ENCODE measurements at regions of chr2 and their contacts with region 1.

Region 1: DNA sequence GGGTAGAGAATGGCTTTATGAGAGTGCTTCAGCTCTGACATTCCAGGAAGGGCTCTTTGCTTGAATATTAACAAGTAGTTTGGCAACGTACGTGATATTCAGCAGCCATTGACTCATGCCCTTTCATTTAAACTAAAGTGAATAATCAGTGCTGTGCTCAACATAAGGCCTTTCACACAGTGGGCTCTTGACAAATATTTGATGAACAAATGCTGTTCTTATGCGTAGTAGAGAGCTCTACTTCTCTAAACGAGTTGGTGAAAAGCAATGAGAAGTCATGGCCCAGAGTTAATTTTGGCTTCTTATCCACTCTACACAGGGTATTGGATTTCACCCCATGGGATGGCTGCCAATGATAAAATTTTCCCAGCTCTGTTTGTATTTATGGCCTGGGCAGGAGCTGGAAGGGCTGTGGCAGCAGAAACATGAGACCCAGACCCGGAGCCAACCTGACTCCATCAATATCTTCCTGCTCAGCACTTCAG is 338.9 kb downstream of the CCDC85A start:
- DNase-seq: peak; percentile 68
- H3K4me3 Mint-ChIP-seq: peak overlapping the region; percentile 32
- H3K27ac Mint-ChIP-seq: peak overlapping the region; percentile 75
- H3K4me1 Mint-ChIP-seq: peaks cover 25% of the 10 kb centered on the region
- H3K27me3 Mint-ChIP-seq: no peaks in the 10 kb centered on the region
- CTCF ChIP-seq: no peak

Region 2: GRCh38 chr2:56191683-56192082 is 331.0 kb before region 1 on chr2:
- CTCF ChIA-PET with region 1: no interaction called
- intact Hi-C with region 1: loop called (anchors 10 kb)
- DNase-seq: peak; percentile 59
- H3K4me3 Mint-ChIP-seq: no peak overlapping the region
- H3K27ac Mint-ChIP-seq: no peak overlapping the region
- H3K4me1 Mint-ChIP-seq: peaks cover 10% of the 10 kb centered on the region
- H3K27me3 Mint-ChIP-seq: peaks cover 9% of the 10 kb centered on the region
- CTCF ChIP-seq: peak; percentile 61

Region 3: GRCh38 chr2:56288838-56289580 is 233.6 kb before region 1 on chr2:
- CTCF ChIA-PET with region 1: no interaction called
- intact Hi-C with region 1: loop called (anchors 5 kb)
- DNase-seq: no peak
- H3K4me3 Mint-ChIP-seq: no peak overlapping the region
- H3K27ac Mint-ChIP-seq: no peak overlapping the region
- H3K4me1 Mint-ChIP-seq: peaks cover 23% of the 10 kb centered on the region
- H3K27me3 Mint-ChIP-seq: no peaks in the 10 kb centered on the region
- CTCF ChIP-seq: no peak

Region 4: DNA sequence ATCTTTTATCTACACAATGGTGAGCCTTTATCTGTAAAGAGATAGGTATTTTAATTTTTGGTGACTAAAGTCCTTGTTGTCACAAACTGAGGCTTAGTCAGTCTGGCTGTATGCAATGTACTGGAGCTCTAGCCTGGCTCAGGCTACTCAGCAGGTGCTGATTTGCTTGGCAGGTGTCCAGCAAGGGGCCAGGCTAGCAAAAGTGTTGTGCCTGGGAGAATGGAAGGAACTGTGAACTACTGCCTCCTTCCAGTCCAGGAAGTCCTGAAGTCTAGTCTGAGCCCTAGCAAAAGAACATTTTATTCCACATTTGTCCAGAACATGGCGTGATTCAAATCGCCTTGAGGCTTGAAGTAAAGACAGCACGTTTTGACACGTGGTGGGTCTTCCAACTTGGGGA is 78.3 kb before region 1 on chr2:
- CTCF ChIA-PET with region 1: no interaction called
- intact Hi-C with region 1: loop called (anchors 2 kb)
- DNase-seq: peak; percentile 83
- H3K4me3 Mint-ChIP-seq: no peak overlapping the region
- H3K27ac Mint-ChIP-seq: peak overlapping the region; percentile 92
- H3K4me1 Mint-ChIP-seq: peaks cover 42% of the 10 kb centered on the region
- H3K27me3 Mint-ChIP-seq: no peaks in the 10 kb centered on the region
- CTCF ChIP-seq: no peak

Region 5: DNA sequence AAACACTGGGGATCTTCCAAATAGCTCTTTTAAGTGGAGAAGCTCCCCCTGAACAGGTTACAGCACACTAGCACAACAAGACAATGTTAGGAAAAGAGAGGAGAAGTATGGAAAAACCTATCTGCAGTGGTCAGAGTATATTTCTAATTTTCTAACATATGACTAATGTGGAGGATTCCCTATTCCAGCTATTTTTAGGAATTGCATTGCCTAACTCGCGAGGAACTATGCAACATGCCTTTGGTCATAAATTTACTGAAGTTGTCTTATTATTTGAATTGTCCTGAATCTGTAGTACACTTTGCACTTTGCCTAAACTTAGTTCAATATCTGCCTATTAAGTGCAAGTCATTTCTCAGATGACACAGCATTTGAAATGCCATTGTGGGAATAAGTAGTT is 42.5 kb after region 1 on chr2:
- CTCF ChIA-PET with region 1: no interaction called
- intact Hi-C with region 1: no loop called
- DNase-seq: no peak
- H3K4me3 Mint-ChIP-seq: no peak overlapping the region
- H3K27ac Mint-ChIP-seq: no peak overlapping the region
- H3K4me1 Mint-ChIP-seq: no peaks in the 10 kb centered on the region
- H3K27me3 Mint-ChIP-seq: no peaks in the 10 kb centered on the region
- CTCF ChIP-seq: no peak